Activated CD4-positive, alpha-beta T cell treated with anti-CD3 and anti-CD28 coated beads for 36 hours (primary cell): ENCODE measurements at regions of chr1 and their contacts with region 1.

Region 1: DNA sequence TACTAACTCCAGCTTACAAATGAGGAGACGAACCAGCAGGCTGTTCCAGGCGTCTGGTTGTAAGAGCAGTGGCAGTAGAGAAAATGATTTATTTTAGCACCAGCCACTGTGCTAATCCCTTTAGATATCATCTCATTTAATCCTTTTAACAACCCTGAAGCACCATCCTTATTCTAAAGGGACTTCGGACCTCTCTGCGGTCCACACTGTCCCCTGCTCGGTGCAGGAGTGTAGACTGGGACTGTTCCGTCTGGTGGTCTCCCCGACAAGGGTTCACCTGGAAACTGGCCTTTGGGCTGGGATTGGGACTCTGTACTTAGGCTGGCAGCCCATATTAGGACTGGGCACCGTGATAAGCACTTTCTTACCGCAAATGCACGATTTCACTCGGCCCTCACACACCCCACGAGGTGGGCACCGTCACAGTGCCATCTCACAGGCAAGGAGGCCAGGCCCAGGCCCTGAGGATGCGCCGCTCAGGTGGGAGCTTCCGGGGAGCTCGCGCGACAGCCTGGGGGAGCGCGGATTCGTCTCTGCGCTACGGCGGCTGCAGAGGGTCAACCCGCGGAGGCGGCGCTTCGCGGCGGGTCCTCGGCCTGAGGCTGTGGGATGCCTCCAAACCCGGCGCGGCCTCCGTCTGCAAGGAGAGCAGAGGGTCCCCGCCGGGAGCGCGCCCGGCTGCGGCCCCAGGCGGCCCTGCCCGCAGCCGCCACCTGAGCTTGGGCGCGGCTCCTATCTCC is 45.2 kb downstream of the ATP1A1 start:
- DNase-seq: peak; percentile 92
- ATAC-seq: peak; percentile 88
- H3K4me3 Mint-ChIP-seq: peak overlapping the region; percentile 92
- H3K27ac Mint-ChIP-seq: peak overlapping the region; percentile 88
- H3K4me1 Mint-ChIP-seq: peaks cover 32% of the 10 kb centered on the region
- H3K27me3 Mint-ChIP-seq: no peaks in the 10 kb centered on the region

Region 2: GRCh38 chr1:116168277-116169097 is 249.8 kb before region 1 on chr1:
- CTCF ChIA-PET with region 1: no interaction called
- POLR2A ChIA-PET with region 1: no interaction called
- intact Hi-C with region 1: loop called in 1 of 2 experiments (anchors 1 kb)
- DNase-seq: peak; percentile 92
- ATAC-seq: peak; percentile 99
- H3K4me3 Mint-ChIP-seq: peak overlapping the region; percentile 60
- H3K27ac Mint-ChIP-seq: peak overlapping the region; percentile 79
- H3K4me1 Mint-ChIP-seq: peaks cover 10% of the 10 kb centered on the region
- H3K27me3 Mint-ChIP-seq: no peaks in the 10 kb centered on the region

Region 3: DNA sequence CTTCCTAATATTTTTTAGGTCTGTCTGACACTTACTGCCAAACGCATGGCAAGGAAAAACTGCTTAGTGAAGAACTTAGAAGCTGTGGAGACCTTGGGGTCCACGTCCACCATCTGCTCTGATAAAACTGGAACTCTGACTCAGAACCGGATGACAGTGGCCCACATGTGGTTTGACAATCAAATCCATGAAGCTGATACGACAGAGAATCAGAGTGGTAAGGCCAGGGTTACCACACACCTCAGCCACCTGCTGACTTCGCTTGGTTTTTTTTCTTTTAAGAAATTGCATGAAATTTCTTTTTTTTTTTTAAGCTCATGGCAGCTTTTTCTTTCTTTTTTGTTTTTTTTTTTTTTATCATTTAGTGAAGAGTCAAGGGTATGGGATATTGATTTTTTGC is 28.1 kb before region 1 on chr1:
- CTCF ChIA-PET with region 1: interaction called, 3 read pairs
- POLR2A ChIA-PET with region 1: no interaction called
- intact Hi-C with region 1: loop called in 1 of 2 experiments (anchors 1 kb)
- DNase-seq: peak; percentile 71
- ATAC-seq: peak; percentile 92
- H3K4me3 Mint-ChIP-seq: no peak overlapping the region
- H3K27ac Mint-ChIP-seq: no peak overlapping the region
- H3K4me1 Mint-ChIP-seq: peaks cover 59% of the 10 kb centered on the region
- H3K27me3 Mint-ChIP-seq: no peaks in the 10 kb centered on the region

Region 4: GRCh38 chr1:116514708-116515525 is 96.7 kb after region 1 on chr1:
- CTCF ChIA-PET with region 1: no interaction called
- POLR2A ChIA-PET with region 1: no interaction called
- intact Hi-C with region 1: loop called in 1 of 2 experiments (anchors 2 kb)
- DNase-seq: peak; percentile 78
- ATAC-seq: peak; percentile 94
- H3K4me3 Mint-ChIP-seq: peak overlapping the region; percentile 39
- H3K27ac Mint-ChIP-seq: peak overlapping the region; percentile 85
- H3K4me1 Mint-ChIP-seq: peaks cover 56% of the 10 kb centered on the region
- H3K27me3 Mint-ChIP-seq: no peaks in the 10 kb centered on the region

Region 5: DNA sequence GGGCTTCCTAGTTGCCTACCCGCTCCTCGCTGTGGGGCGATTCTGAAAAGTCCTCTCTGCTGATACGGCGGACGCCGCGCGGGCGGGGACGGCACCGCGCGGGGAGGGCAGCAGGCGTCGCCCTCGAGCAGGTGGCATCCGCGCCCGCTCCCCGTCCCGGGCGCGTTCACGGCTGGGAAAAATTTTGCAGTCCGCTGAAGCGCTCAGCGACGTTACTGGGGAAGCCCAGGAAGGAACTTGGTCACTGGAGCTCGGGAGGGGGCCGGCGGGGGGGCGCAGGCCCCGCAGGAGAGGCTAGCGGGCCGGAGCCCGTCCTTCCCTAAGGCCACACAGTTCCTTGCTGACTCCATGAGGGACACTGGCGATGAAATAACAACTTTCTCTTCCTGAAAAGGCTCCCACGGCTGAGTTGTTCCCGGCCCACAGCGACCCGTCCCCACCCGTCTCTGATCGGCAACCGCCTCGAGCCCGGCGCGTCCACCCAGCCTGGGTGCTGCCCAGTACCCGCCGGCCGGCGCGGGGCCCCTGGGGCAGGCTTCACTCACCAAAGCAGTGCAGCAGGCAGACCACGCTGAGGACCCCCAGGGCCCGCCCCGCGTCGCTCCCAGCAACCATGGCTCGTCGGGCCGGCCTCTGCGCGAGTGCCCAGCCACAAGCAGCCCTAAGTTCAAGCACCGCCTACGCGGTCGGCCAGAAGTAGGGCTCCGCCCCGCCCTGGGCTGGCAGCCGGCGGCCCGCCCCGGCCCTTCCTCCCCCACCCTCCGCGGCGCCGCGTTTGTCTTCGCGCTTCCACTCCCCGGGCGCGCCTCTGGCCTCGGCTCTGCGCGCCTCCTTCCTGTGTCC is 152.3 kb after region 1 on chr1 and contains the start of gene CD58:
- CTCF ChIA-PET with region 1: interaction called, 3 read pairs
- POLR2A ChIA-PET with region 1: no interaction called
- intact Hi-C with region 1: loop called (anchors 2 to 10 kb)
- DNase-seq: peak; percentile 93
- ATAC-seq: peak; percentile 77
- H3K4me3 Mint-ChIP-seq: peak within 1 kb of the TSS; percentile 91
- H3K27ac Mint-ChIP-seq: peak within 1 kb of the TSS; percentile 87
- H3K4me1 Mint-ChIP-seq: peaks cover 64% of the 10 kb centered on the region
- H3K27me3 Mint-ChIP-seq: peaks cover 8% of the 10 kb centered on the region
- total RNA-seq, gene CD58: 12.4 to 16.0 TPM

Region 6: DNA sequence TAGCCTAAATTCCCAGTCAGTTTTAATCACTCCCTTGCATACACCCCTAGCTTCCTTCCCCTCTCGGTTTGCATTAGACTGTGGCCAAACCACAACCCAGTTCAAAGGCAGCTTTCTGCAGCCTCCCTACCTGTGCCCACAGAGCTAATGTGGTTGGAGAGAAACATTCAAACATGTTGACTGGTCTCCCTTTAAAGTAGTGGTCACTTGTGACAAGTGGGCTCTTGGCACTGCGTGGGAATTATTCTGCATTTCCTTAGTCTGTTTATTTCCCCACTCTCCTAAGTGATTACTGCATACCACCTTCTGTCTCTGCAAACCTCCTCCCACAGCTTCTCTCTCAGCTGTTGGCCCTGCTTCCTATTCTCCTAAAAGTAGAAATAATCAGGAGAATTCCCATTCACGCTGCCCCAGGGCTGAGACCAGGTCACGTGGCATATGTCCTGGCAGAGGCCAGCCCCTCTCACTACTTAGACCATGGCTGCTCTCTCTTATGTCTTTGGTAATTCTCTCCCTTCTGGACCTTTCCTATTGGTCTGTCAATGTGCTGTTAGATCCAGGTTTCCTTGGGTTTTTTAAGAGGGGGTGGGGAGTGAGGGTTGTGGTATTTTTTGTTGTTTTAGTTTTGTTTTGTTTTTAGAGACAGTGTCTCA is 544.9 kb after region 1 on chr1:
- CTCF ChIA-PET with region 1: no interaction called
- POLR2A ChIA-PET with region 1: no interaction called
- intact Hi-C with region 1: no loop called
- DNase-seq: peak; percentile 25
- ATAC-seq: peak; percentile 69
- H3K4me3 Mint-ChIP-seq: no peak overlapping the region
- H3K27ac Mint-ChIP-seq: no peak overlapping the region
- H3K4me1 Mint-ChIP-seq: no peaks in the 10 kb centered on the region
- H3K27me3 Mint-ChIP-seq: no peaks in the 10 kb centered on the region